ENCODE measurements at regions of chr12 and their contacts with region 1.

Region 1: DNA sequence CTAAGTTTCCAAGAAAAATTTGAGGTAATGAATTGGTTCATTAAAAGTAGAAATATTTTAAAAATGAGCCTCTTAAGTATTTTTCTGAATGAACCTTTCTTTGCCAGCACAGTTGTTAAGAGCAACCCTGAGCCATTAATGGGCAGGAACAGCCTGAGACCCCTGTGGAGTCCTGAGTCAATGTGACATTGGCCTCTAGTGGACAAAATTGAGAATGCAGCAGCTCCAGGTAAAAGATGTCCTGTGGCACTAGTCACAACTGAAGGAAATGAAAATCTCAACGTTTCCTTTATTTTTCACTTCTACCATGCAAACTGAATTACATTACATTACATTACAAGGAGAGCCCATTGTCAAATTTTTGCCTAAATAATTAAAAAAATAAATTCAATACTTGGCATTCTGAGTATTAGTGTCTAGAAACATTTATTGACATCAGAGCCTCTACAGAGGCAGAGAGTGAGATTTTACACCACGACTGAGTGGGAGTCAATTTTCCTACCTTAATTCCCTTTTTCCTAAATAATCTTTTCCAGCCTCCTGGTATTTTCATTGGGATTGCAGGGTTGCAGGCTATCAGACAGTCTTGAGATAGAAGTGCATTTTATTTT is 135.7 kb downstream of the PPM1H start:
- DNase-seq: peak; percentile 51 to 91
- H3K4me3 ChIP-seq: no peak overlapping the region
- H3K27ac ChIP-seq: no peak overlapping the region
- H3K4me1 ChIP-seq: peaks cover 0 to 12% (median 5%) of the 10 kb centered on the region in 4 donors
- H3K27me3 ChIP-seq: no peaks in the 10 kb centered on the region
- CTCF ChIP-seq: peak in 6 of 7 experiments; percentile 11 to 96 (median 87)
- EP300 ChIP-seq: no peak
- POLR2A ChIP-seq: no peak

Region 2: DNA sequence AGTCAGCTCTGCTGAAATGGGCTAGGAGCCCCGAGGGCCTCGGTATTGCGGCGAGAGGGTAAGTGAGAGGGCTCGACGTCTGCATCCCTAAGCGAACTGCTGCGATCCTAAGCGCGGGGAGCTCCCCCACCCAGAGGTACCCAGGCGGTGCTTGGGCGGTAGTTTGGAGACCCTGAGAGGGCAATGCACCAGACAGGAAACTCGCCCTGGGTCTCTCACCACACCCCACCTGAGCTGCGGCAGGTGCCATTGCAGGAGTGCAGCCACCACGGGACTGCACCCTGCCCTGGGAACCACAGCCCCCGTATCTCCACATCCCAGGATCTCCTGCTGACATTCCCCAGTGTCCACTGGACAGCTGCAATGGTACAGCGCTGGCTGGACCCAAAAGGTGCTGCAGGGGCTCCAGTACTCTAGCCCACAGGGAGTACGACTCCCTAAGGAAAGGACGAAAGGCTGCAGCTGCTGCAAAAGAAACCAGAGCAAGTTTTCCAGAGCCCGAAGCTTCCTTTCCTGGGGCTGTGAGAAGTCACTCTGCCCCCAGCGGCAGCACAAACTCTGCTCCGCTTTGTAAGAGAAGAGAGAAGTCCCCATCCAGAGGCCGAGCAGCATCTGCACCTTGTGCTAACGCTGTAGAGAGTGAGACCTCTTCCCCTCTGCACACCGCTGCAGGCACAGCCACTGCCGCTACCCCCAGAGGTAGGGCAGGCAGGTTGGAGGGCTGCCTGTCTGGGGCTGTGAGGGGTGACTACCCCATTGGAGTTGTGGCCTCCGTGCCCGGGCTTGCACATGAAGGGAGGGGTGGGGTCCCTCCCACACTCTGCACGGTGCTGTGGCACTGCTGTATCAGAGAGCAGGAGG is 363.7 kb before region 1 on chr12:
- intact Hi-C with region 1: loop called (anchors 10 kb)
- DNase-seq: peak; percentile 49 to 79
- H3K4me3 ChIP-seq: peak overlapping the region; percentile 46 to 63 (median 51)
- H3K27ac ChIP-seq: no peak overlapping the region
- H3K4me1 ChIP-seq: peaks cover 10 to 24% (median 18%) of the 10 kb centered on the region in 4 donors
- H3K27me3 ChIP-seq: peaks cover 0 to 25% (median 14%) of the 10 kb centered on the region in 3 donors
- CTCF ChIP-seq: peak in 3 of 7 experiments; percentile 2 to 28 (median 21)
- EP300 ChIP-seq: no peak
- POLR2A ChIP-seq: no peak

Region 3: GRCh38 chr12:62581288-62582064 is 217.8 kb before region 1 on chr12:
- intact Hi-C with region 1: loop called (anchors 5 kb)
- DNase-seq: peak in 1 of 2 donors; percentile 80
- H3K4me3 ChIP-seq: no peak overlapping the region
- H3K27ac ChIP-seq: no peak overlapping the region
- H3K4me1 ChIP-seq: peaks cover 0 to 5% (median 0%) of the 10 kb centered on the region in 4 donors
- H3K27me3 ChIP-seq: no peaks in the 10 kb centered on the region
- CTCF ChIP-seq: peak in 5 of 7 experiments; percentile 31 to 65 (median 53)
- EP300 ChIP-seq: no peak
- POLR2A ChIP-seq: no peak

Measured in stomach (tissue), 19 donors.